ENCODE measurements at regions of chr19 and their contacts with region 1.

Region 1: DNA sequence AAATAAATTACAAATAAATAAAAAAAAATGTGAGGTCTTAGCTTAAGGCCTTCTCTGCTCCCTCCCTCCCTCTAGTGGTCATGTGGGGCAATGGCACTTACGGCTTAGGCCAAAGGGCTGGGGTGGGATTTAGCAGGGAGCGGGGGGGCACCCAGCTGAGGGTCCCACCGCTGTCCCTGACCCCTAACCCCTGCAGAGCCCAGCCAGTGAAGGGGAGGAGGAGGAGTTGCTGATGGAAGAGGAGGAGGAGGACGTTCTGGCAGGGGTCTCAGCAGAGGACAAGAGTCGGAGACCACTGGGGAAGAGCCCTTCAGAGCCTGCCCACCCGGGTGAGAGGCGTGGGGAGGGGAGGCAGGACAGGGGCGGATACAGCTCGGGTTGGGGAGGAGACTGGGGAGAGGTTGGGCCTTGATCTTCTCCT is 9.3 kb downstream of the MPND start:
- DNase-seq: no peak
- H3K4me3 ChIP-seq: no peak overlapping the region
- CTCF ChIP-seq: peak; percentile 72

Region 2: DNA sequence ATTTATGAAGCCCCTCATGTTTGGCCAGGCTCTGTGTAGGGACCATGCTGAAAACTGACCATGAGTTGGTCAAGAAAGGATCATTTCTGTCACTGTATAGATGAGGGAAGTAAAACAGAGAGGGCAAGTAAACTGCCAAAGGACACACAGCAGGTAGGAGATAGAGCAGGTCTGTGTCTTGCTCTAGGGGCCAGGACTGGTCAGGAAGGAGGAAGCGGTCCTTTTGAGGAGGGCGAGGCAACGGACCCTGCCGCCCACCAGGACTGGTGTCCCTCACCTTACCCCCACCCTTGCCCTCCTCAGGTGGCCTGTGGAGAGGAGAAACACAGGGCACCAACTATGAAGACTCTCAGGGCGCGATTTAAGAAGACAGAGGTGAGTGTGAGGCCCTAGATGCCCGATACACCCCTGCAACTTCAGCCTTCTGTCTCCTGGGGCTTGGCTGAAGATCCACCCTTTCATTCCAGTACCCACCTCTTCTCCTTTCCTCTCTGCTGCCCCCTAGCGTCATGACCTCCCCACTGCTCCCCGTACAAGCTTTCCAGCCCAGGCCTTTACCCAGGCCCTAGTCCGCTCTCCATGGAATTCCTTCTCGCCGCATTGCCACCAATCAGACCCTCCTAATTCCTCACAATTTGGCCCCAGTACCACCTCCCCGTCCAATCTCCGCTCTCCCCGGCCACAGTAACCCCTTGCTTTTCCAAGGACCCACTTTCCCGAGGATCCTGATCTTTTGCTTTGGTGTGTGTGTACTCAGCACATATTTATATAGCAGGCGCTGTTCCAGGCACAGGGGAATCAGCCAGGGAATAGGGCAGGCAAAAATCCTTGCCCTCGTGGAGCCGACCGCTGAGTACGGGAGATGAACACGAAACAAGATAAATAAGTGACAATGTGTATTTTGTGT is 166.4 kb before region 1 on chr19:
- CTCF ChIA-PET with region 1: no interaction called
- POLR2A ChIA-PET with region 1: no interaction called
- DNase-seq: no peak
- H3K4me3 ChIP-seq: no peak overlapping the region
- CTCF ChIP-seq: peak; percentile 85

Region 3: DNA sequence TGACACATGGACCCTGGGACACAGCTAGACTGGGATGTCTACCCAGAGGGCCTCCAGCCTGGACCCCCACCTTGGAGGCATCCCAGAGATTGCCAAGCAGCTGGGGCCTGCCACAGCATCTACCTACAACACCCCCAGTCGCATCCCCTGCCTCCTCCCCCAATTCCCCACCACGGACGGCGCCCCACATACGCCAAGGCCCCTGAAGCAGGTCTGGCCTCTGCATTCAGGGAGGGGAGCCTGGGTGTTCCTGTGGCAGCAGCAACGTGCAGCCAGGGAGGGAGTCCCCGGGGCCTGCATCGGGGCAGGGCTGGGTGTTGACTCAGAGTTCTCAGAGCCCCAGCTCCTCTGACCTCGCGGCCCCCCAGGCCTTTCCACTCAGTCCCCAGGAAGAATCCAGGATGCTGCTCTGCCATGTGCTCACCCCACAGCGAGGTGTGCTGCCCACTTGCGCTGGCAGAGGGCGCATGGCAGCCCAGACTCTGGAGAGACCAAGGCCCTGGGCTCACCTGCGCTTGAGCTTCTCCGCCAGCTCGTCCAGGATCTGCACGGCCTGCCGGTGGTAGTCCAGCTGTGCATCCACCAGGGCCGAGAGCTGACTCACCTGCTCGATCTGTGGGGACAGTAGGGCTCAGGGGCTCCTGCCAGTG is 10.3 kb after region 1 on chr19:
- CTCF ChIA-PET with region 1: interaction called, 63 read pairs
- POLR2A ChIA-PET with region 1: interaction called, 3 read pairs
- DNase-seq: no peak
- H3K4me3 ChIP-seq: no peak overlapping the region
- CTCF ChIP-seq: peak; percentile 22

Region 4: DNA sequence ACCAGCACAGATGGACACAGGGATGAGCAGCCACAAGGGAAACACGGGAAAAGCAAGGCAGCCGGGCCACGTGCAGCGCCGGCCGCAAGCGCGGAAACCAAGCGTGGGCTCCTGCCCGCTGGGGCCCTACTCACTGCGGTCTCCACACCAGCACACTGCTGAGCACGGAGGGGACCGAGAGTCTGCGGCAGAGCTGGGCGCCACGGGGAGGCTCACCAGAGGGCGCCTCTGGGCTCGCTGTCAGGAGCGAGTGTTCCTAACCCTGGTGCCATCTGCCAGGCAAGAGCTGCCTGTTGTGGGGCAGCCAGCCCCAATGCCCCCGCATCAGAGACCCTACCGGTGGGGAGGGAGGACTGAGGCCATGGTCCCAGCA is 17.2 kb after region 1 on chr19:
- CTCF ChIA-PET with region 1: interaction called, 63 read pairs
- POLR2A ChIA-PET with region 1: interaction called, 3 read pairs
- DNase-seq: no peak
- H3K4me3 ChIP-seq: no peak overlapping the region
- CTCF ChIP-seq: peak; percentile 62